ENCODE measurements at regions of chr1 and their contacts with region 1.

Region 1: DNA sequence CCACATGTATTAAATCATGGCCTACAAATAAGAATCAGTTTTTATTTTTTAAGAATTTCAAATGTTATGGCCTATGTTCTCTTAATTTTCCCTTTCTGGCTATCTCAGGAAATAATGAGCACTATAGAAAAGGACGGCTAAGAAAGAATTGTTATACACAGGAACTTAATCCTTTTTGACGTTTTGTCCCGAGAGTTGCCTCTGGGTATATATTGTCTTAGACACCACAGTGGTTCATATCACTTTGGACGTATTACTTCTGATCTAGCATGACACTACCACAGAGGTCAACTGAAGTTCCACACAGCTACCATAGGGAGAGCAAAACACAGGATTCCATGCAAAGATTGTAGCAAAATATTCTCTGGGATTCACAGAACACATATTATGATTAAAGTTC is 307.6 kb downstream of the VAV3 start:
- DNase-seq: no peak
- H3K4me3 ChIP-seq: no peak overlapping the region
- H3K27ac ChIP-seq: no peak overlapping the region
- H3K4me1 ChIP-seq: no peaks in the 10 kb centered on the region
- H3K27me3 ChIP-seq: no peaks in the 10 kb centered on the region
- CTCF ChIP-seq: no peak

Region 2: DNA sequence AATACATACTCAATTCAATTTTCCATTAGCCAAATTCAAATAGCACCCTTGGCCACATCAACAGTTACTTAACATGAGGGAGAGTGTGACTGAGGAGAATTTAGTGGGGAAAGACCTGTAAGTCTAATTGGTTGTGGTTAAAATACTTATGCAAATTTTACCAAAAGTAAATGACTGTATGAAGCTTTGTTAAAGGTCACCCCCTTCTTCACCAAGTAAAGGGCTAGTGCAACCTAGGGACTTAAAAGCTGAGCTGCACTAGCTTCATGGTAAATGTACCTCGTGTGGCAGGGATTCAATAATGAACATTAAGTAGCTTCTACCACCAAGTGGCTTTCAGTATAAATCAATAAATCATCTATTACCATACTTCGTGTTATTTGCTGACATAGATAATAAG is 144.5 kb before region 1 on chr1:
- CTCF ChIA-PET with region 1: interaction called, 21 read pairs
- POLR2A ChIA-PET with region 1: no interaction called
- intact Hi-C with region 1: no loop called
- DNase-seq: no peak
- H3K4me3 ChIP-seq: no peak overlapping the region
- H3K27ac ChIP-seq: no peak overlapping the region
- H3K4me1 ChIP-seq: no peaks in the 10 kb centered on the region
- H3K27me3 ChIP-seq: peaks cover 6% of the 10 kb centered on the region; the same call in 1 of the 2 replicates
- CTCF ChIP-seq: no peak